Right ventricle myocardium inferior (tissue), 1 donor: ENCODE measurements at regions of chr5 and their contacts with region 1.

Region 1: DNA sequence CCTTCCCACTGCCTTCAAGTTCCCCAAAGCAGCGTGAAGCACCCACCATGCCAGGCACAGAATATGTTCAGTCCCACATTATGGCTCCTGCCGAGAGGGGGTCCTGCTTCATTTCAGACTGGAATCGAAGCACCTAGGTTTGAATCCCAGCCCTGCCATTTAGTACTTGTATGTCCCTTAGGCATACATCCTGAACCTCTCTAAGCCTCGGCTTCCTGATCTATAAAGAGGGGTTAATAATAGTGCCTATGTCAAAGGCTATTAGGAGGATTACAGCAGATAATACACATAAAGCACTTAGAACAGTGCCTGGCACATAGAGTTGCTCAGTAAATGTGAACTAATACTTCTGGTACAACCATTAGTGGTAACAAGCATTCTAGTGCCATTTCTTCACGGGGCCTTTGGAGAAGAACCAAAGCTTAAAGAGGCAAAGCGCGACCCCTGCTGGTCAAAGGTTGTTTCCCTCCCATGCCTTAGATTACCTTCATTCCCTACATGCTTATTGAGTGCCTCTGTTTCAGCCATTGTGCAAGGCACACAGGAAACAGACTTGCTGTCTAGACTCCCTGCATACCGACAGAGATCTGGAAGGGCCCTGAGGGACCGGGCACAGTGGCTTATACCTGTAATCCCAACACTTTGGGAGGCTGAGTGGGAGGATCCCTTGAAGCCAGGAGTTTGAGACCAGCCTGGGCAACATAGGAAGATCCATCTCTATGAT is 98.2 kb downstream of the PPARGC1B start:
- DNase-seq: peak; percentile 84
- ATAC-seq: peak; percentile 66

Region 2: DNA sequence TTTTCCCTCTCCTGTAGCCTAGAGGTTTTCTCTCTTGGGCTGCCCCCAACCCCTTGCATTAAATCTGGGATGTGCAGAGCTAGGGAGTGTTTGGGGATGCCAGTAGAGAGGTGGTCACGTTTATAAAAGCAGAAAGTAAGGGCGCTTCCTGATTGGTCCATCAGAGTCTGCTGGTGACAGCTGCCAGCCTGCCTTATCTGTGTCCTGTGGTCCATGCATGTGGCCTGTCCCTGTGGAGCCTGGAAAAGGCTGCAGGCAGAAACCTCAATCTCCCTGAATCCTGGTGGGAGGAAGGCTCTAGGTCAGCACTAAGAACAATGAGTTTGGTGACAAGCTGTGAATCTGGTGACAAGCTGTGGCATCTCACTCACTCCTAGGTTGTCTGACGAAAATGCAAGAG is 204.8 kb before region 1 on chr5:
- intact Hi-C with region 1: no loop called
- DNase-seq: no peak
- ATAC-seq: no peak

Region 3: GRCh38 chr5:149636851-149637246 is 191.5 kb before region 1 on chr5:
- intact Hi-C with region 1: loop called (anchors 2 kb)
- DNase-seq: no peak
- ATAC-seq: peak; percentile 67

Region 4: GRCh38 chr5:149667084-149667828 is 161.1 kb before region 1 on chr5:
- intact Hi-C with region 1: loop called (anchors 1 kb)
- DNase-seq: no peak
- ATAC-seq: peak; percentile 53

Region 5: DNA sequence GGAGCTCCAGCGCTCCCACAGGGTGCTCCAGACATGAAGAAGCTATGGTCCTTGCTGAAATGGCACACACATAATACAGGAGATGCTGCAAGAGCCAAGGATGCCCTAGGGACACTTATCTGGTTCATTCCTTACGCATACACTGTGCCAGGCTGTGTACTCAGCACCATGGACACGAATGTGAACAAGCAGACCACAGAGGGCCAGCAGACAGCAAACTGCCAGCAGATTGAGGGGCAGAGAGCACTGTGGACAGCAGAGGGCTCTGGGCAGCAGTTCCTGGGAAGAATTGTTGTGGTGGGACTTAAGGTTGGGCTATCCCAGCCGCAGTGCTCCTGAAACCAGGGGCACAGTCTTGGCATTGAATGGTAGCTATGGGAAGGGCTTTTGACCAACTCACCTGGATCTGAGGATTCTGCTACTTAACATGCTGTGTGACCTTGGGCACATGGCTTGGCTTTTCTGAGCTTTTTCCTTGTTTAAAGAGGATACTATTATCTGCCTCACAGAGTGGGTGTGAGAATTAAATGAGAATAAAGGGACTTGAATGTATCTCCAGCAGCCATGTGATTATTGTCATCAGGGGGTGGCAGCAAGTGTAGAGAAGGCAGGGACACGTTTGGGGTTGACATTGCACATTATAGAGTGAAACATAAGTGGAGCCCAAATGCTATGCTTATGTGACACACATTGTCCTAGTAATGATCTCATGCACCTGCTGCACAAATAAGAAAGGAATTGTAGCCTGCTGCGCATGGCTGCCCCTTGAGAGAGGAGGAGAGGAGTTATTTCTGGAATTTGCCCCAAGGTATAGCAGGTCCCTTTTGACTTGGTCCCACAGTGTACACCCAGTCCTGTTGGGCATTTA is 68.1 kb before region 1 on chr5:
- intact Hi-C with region 1: loop called (anchors 5 kb)
- DNase-seq: no peak
- ATAC-seq: peak; percentile 47

Region 6: DNA sequence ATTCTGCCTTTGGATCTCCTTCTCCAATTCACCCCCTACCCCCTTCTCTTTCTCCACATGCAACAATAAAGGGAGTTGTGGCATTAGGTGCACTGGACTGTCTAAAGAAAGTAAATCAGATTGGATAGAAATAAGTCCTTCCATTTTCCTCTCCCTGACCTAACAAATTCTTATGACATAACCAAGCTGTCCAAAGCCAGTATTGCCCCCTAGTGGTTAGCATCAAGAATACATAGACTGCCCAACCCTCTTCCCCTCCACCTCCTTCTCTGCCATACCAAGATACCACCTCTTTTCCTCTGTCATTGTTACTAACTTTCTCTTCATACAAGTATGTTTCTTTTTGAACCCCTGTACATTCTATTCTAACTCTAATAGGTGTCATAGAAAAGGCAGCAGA is 52.5 kb before region 1 on chr5:
- intact Hi-C with region 1: loop called (anchors 1 kb)
- DNase-seq: no peak
- ATAC-seq: no peak

Region 7: DNA sequence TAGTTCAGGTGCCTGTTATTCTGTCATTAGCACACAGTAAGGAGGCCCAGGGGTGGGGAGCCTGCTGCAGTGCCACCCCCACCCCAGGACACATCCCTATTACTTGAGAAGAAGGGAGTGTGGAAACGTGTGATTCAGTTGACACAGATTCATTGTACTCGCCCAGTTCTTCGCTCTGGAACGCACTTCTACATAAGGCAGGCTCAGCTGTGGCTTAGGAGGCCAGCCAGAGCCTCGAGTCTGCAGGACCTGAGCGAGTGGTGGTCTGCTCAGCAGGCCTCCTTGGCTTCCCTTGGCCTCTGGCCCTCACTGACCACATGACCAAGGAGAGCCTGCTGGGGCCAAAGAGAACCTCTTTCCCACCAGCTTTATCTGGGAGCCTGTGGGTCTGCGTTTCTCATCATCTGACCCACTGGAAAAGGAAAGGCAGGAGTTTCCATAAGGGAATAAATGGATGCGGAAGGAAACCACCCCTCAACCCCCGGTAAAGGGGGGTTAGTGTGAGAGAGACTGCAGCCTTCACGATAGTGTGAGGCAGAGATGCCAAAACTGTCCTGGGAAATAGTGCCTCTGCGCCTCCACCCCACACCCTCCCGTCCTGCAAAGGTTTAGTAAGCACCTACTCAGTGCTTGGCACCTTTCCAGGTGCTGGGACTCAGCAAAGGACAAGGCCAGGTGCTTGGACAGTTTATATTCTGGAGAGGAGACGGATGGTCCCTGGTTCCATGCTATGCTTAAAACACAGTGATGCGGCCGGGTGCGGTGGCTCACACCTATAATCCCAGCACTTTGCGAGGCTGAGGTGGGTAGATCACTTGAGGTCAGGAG is 24.5 kb before region 1 on chr5:
- intact Hi-C with region 1: loop called (anchors 2 kb)
- DNase-seq: no peak
- ATAC-seq: no peak